Aorta (tissue), 5 donors: ENCODE measurements at regions of chr10 and their contacts with region 1.

Region 1: DNA sequence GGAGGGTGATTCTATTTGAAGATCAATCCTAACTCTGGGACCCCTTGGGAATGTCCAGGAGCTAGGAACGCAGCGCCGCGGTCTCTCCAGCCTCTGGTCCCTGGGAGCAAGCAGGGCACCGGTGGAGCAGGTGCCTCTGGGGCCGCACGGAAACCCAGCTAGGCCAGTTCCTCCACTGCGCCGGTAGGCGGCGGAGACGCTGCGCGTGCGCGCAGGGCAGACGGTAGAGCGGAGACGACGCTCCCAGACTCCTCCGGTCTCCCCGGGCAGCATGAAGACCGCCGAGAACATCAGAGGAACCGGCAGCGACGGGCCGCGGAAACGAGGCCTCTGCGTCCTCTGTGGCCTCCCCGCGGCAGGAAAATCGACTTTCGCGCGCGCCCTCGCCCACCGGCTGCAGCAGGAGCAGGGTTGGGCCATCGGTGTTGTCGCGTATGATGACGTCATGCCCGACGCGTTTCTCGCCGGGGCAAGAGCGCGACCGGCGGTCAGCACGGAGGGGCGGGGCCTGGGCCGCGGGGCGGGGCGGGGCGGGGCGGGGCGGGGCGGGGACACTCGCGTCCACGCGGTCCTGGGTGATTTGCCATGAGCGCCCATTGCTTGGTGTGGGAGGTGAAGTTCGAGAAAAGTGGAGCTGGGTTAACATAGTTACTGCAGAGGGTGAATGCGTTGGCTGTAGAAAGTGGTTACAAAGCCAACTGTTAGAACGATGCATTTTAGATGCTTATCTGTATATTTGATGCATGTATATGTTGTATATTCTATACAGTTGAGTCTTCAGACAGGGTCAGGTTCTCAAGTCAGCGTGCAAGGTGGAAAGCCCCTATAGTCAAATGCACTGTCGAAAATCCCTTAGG is at the start of gene PSTK:
- DNase-seq: peak; percentile 96 to 98
- ATAC-seq: peak; percentile 99
- H3K4me3 ChIP-seq: peak within 1 kb of the TSS; percentile 62 to 84
- H3K27ac ChIP-seq: peak within 1 kb of the TSS in 1 of 2 donors; percentile 66
- H3K4me1 ChIP-seq: no peaks in the 10 kb centered on the region
- H3K27me3 ChIP-seq: no peaks in the 10 kb centered on the region
- total RNA-seq, gene PSTK: 1.6 to 2.0 TPM

Region 2: DNA sequence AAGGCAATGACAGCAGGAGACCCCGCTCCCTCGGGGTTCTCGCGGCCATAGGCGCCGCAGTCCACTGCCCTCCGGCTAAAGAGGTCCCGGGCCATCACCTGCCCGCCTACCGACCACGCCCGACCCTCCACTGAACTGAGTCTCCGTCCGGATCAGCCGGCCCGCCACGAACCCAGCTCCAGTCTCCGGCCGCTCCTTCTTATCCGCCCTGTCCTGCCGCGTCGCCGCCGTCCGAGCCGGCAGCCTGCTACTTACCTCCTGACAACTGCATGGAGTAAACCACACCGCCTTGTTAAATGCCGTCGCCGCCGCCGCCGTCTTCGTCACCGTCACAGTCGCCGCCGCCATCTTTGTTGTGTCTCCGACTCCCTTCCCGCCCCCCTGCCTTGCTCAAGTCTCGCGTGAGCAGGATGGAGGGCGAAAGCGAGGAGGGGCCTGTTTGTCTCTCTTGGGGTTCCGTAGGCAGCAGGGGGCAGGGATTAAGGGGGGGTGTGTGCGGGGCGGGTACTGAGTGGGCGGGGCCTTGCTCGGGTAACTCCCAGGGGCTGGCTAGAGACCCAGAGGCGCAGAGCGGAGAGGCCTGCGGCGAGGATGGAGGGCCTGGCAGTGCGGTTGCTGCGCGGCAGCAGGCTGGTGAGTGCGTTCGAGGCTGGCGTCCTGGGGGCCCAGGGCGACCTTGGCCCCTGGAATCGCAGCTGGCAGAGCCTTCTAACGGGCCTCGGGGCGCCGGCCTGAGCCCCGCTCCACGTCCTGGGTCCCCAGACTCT is 28.2 kb after region 1 on chr10 and contains the starts of genes ACADSB and IKZF5:
- intact Hi-C with region 1: loop called in 1 of 2 experiments (anchors 2 kb)
- DNase-seq: peak; percentile 98
- ATAC-seq: peak; percentile 100
- H3K4me3 ChIP-seq: peak within 1 kb of the TSS; percentile 70 to 94
- H3K27ac ChIP-seq: peak within 1 kb of the TSS in 1 of 2 donors; percentile 83
- H3K4me1 ChIP-seq: peaks cover 0 to 1% of the 10 kb centered on the region in 2 donors
- H3K27me3 ChIP-seq: no peaks in the 10 kb centered on the region
- total RNA-seq, gene ACADSB: 17.9 to 25.5 TPM
- total RNA-seq, gene IKZF5: 17.8 to 21.5 TPM